Mammary epithelial cell (primary cell): ENCODE measurements at regions of chr14 and their contacts with region 1.

Region 1: DNA sequence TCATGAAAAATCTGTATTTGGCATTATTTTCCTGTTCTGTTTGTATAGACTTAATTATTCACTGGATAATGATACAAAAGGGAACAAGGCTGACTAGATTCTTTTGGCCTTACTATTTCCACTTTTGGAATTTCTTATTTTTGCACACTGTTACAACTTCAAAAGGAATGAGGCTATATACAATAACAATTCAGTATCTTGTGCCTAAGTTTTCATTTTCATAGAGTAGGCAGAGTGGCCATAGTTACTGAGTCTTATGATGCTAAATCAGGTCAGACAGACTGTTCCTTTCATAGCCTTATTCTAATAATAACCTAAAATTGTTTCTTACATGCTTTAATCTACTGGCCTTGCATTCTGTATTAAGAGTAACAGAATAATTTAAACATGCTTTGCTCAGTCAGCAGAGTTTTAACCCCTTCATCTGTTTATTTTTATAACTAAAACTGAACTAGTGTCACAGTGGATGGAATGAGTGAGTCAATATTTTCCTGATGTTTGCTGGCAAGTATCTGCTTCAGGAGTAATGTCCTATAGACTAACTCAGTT is 10.5 kb downstream of the TTC8 start:
- DNase-seq: peak; percentile 19
- H3K4me3 ChIP-seq: no peak overlapping the region
- H3K27ac ChIP-seq: peak overlapping the region; percentile 40
- H3K4me1 ChIP-seq: peaks cover 44% of the 10 kb centered on the region
- H3K27me3 ChIP-seq: no peaks in the 10 kb centered on the region
- CTCF ChIP-seq: no peak

Region 2: GRCh38 chr14:88849716-88850115 is 14.8 kb after region 1 on chr14:
- CTCF ChIA-PET with region 1: interaction called, 10 read pairs
- dilution Hi-C with region 1: no loop called
- in situ Hi-C with region 1: no loop called
- intact Hi-C with region 1: no loop called
- DNase-seq: no peak
- H3K4me3 ChIP-seq: no peak overlapping the region
- H3K27ac ChIP-seq: no peak overlapping the region
- H3K4me1 ChIP-seq: peaks cover 21% of the 10 kb centered on the region
- H3K27me3 ChIP-seq: no peaks in the 10 kb centered on the region
- CTCF ChIP-seq: no peak